ENCODE measurements at regions of chr6 and their contacts with region 1.

Region 1: GRCh38 chr6:109705258-109705657 is 14.2 kb downstream of the FIG4 start:
- DNase-seq: peak; percentile 74 to 89
- ATAC-seq: peak; percentile 77 to 94 (median 79)
- H3K4me3 ChIP-seq: no peak overlapping the region
- H3K4me3 Mint-ChIP-seq: peak overlapping the region; percentile 58
- H3K27ac ChIP-seq: no peak overlapping the region
- H3K27ac Mint-ChIP-seq: peak overlapping the region; percentile 88 to 93
- H3K4me1 ChIP-seq: peaks cover 9% of the 10 kb centered on the region
- H3K4me1 Mint-ChIP-seq: peaks cover 89% of the 10 kb centered on the region in 2 donors
- H3K27me3 ChIP-seq: no peaks in the 10 kb centered on the region
- H3K27me3 Mint-ChIP-seq: no peaks in the 10 kb centered on the region
- CTCF ChIP-seq: peak; percentile 97

Region 2: GRCh38 chr6:109690737-109691621 is 14.3 kb before region 1 on chr6 and contains the starts of genes AK9 and FIG4:
- intact Hi-C with region 1: loop called (anchors 2 kb)
- DNase-seq: peak; percentile 80 to 93
- ATAC-seq: peak; percentile 93 to 97 (median 96)
- H3K4me3 ChIP-seq: peak within 1 kb of the TSS; percentile 85
- H3K4me3 Mint-ChIP-seq: peak within 1 kb of the TSS; percentile 100
- H3K27ac ChIP-seq: peak within 1 kb of the TSS; percentile 79
- H3K27ac Mint-ChIP-seq: peak within 1 kb of the TSS; percentile 91 to 92
- H3K4me1 ChIP-seq: peaks cover 14% of the 10 kb centered on the region
- H3K4me1 Mint-ChIP-seq: peaks cover 34 to 49% of the 10 kb centered on the region in 2 donors
- H3K27me3 ChIP-seq: no peaks in the 10 kb centered on the region
- H3K27me3 Mint-ChIP-seq: no peaks in the 10 kb centered on the region
- CTCF ChIP-seq: no peak
- total RNA-seq, gene AK9: 14.0 to 19.2 (median 14.2) TPM
- total RNA-seq, gene FIG4: 15.7 to 38.5 (median 20.7) TPM

Region 3: GRCh38 chr6:110039364-110039980 is 334.2 kb after region 1 on chr6:
- intact Hi-C with region 1: loop called (anchors 1 kb)
- DNase-seq: peak; percentile 79 to 91
- ATAC-seq: peak; percentile 87 to 90 (median 89)
- H3K4me3 ChIP-seq: peak overlapping the region; percentile 40
- H3K4me3 Mint-ChIP-seq: peak overlapping the region; percentile 89
- H3K27ac ChIP-seq: peak overlapping the region; percentile 77
- H3K27ac Mint-ChIP-seq: peak overlapping the region; percentile 92 to 98
- H3K4me1 ChIP-seq: peaks cover 38% of the 10 kb centered on the region
- H3K4me1 Mint-ChIP-seq: peaks cover 26 to 36% of the 10 kb centered on the region in 2 donors
- H3K27me3 ChIP-seq: no peaks in the 10 kb centered on the region
- H3K27me3 Mint-ChIP-seq: no peaks in the 10 kb centered on the region
- CTCF ChIP-seq: peak; percentile 73

Region 4: GRCh38 chr6:110296241-110297025 is 591.2 kb after region 1 on chr6:
- intact Hi-C with region 1: loop called (anchors 5 kb)
- DNase-seq: peak in 1 of 2 donors; percentile 18
- ATAC-seq: peak; percentile 44 to 73 (median 67)
- H3K4me3 ChIP-seq: peak overlapping the region; percentile 21
- H3K4me3 Mint-ChIP-seq: peak overlapping the region; percentile 77
- H3K27ac ChIP-seq: peak overlapping the region; percentile 84
- H3K27ac Mint-ChIP-seq: peak overlapping the region; percentile 67 to 84
- H3K4me1 ChIP-seq: peaks cover 7% of the 10 kb centered on the region
- H3K4me1 Mint-ChIP-seq: peaks cover 10 to 31% of the 10 kb centered on the region in 2 donors
- H3K27me3 ChIP-seq: no peaks in the 10 kb centered on the region
- H3K27me3 Mint-ChIP-seq: peaks cover 0 to 4% of the 10 kb centered on the region in 2 donors
- CTCF ChIP-seq: no peak